ENCODE measurements at regions of chr3 and their contacts with region 1.

Region 1: DNA sequence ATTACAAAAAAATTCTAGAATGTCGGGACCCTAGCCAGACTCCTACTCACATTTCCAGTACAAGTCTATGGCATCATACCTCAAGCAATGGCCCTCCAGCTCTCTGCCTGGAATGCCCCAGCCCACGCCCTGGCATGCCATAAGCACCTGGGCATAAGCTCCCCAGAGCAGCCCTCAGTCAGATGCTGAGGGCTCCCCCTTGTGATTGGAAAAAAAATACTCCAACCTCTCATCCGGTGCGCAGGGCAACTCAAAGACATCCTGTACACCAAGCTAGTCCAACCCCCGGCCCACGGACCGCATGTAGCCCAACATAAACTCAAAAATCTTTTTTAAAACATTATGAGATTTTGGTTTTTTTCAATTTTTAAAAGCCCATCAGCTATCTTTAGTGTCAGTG is 115.4 kb downstream of the NEK10 start:
- DNase-seq: peak; percentile 21
- ATAC-seq: peak; percentile 84
- H3K4me3 ChIP-seq: no peak overlapping the region
- H3K27ac ChIP-seq: no peak overlapping the region
- H3K4me1 ChIP-seq: no peaks in the 10 kb centered on the region
- H3K27me3 ChIP-seq: no peaks in the 10 kb centered on the region
- CTCF ChIP-seq: peak; percentile 46
- POLR2A ChIP-seq: no peak
- RAD21 ChIP-seq: peak; percentile 64

Region 2: GRCh38 chr3:27141668-27142067 is 112.2 kb before region 1 on chr3:
- CTCF ChIA-PET with region 1: interaction called, 10 read pairs
- POLR2A ChIA-PET with region 1: no interaction called
- dilution Hi-C with region 1: no loop called
- in situ Hi-C with region 1: loop called (anchors 10 kb)
- intact Hi-C with region 1: no loop called
- DNase-seq: no peak
- ATAC-seq: no peak
- H3K4me3 ChIP-seq: no peak overlapping the region
- H3K27ac ChIP-seq: no peak overlapping the region
- H3K4me1 ChIP-seq: no peaks in the 10 kb centered on the region
- H3K27me3 ChIP-seq: no peaks in the 10 kb centered on the region
- CTCF ChIP-seq: no peak; the same call in 1 of the 2 replicates
- POLR2A ChIP-seq: no peak
- RAD21 ChIP-seq: no peak